Activated T-helper 1 cell treated with anti-CD3 and anti-CD28 coated beads, Interleukin-12 subunit alpha, Interleukin-12 subunit beta, Interleukin-2, Interleukin-4 antibody, amounts not matched to agents 30 ng/mL and 10 ng/mL and 1 ng/mL, durations not matched to agents 14 hours and 24 hours and 36 hours (primary cell): ENCODE measurements at regions of chr4 and their contacts with region 1.

Region 1: DNA sequence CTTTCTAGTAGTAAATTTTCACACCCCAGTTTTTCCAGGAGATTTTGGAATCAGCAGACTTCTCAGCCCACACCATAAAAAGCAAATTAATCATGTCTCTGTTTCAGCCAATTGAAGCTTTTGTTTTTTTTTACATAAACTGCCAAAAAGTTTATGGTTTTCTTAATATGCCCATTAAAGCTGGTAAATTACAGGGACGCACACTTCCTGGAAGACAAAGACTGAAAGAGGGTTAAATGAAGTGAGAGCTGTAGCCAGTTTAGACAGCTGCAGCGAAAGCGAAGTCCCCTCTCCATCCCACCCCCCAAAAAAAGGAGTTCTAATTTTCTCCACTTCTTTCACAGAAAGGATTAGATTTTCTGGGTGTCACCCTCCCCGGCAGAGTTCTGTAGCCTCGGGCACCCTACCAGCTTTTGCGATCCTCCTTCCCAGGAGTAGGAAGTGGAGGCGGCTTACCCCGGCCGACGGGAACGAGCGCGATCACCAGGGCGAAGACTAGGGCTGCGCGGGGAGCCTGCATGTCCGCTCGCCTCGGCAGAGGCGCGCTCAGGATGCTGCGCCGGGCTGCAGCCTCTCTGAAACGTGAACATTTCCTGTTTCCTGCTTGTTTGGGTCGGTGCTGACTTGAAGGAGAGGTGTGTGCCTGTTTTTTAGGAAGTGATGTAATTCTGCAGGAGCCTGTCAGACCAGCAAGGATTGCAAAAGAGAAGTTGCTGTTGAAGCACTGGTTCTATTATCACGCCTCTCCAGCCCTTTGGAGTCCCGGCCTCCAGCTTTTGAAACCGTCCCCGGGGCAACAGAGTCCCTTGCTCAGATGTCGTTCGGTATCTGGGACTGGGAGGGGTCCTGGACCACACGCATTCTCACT is at the start of gene TMEM154:
- DNase-seq: peak; percentile 77
- H3K4me3 Mint-ChIP-seq: peak within 1 kb of the TSS; percentile 91
- H3K27ac Mint-ChIP-seq: peak within 1 kb of the TSS; percentile 92
- H3K4me1 Mint-ChIP-seq: peaks cover 84% of the 10 kb centered on the region
- H3K27me3 Mint-ChIP-seq: no peaks in the 10 kb centered on the region
- total RNA-seq, gene TMEM154: 13.0 and 13.3 TPM in 2 replicates

Region 2: DNA sequence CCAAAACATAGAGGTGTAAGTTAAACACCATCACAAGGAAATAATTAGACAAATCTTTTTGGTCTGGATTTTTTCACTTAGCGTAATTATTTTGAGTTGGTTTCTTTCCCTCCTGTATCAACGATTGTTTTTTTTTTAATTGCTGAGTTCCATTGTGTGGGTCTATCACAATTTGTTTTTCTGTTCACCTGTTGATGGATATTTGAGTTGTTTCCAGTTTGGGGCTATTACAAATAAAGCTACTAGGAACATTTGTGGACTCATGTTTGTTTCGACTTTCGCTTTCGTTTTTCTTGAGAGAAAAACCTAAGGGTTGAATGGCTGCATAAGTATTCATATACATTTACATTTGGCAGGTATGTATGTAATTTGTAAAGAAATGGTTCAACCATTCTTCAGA is 123.4 kb before region 1 on chr4:
- intact Hi-C with region 1: loop called (anchors 1 kb)
- DNase-seq: no peak
- H3K4me3 Mint-ChIP-seq: peak overlapping the region; percentile 41
- H3K27ac Mint-ChIP-seq: peak overlapping the region; percentile 77
- H3K4me1 Mint-ChIP-seq: peaks cover 43% of the 10 kb centered on the region
- H3K27me3 Mint-ChIP-seq: no peaks in the 10 kb centered on the region

Region 3: GRCh38 chr4:152663203-152664066 is 16.2 kb before region 1 on chr4:
- intact Hi-C with region 1: loop called (anchors 2 kb)
- DNase-seq: no peak
- H3K4me3 Mint-ChIP-seq: peak overlapping the region; percentile 59
- H3K27ac Mint-ChIP-seq: peak overlapping the region; percentile 87
- H3K4me1 Mint-ChIP-seq: peaks cover 53% of the 10 kb centered on the region
- H3K27me3 Mint-ChIP-seq: no peaks in the 10 kb centered on the region

Region 4: GRCh38 chr4:152689615-152690501 is 10.2 kb after region 1 on chr4:
- intact Hi-C with region 1: loop called (anchors 1 kb)
- DNase-seq: no peak
- H3K4me3 Mint-ChIP-seq: no peak overlapping the region
- H3K27ac Mint-ChIP-seq: no peak overlapping the region
- H3K4me1 Mint-ChIP-seq: peaks cover 1% of the 10 kb centered on the region
- H3K27me3 Mint-ChIP-seq: no peaks in the 10 kb centered on the region

Region 5: GRCh38 chr4:152696764-152697261 is 17.2 kb after region 1 on chr4:
- intact Hi-C with region 1: loop called (anchors 1 kb)
- DNase-seq: peak; percentile 64
- H3K4me3 Mint-ChIP-seq: no peak overlapping the region
- H3K27ac Mint-ChIP-seq: no peak overlapping the region
- H3K4me1 Mint-ChIP-seq: peaks cover 23% of the 10 kb centered on the region
- H3K27me3 Mint-ChIP-seq: peaks cover 13% of the 10 kb centered on the region

Region 6: DNA sequence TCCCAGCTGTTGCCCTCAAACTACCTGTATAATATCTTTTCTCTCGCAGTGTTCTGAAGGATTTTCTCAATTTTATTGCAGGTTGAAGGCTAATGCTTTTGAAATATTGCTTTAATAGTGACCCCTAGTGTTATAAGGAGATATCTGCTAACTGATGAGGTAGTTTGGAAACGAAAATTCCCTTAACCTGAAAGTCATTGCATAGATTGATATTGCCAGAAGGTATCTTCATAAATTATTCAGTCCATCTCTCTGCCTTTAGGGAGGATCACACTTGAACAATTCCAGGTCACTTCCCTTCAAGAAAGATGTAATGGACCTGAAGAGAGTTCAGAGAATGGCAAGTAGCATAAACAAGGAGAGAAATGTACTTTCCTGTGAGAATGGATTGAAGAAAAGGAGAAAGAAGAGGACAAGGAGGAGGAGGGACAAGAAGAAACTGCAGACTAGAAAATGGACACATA is 55.8 kb after region 1 on chr4:
- intact Hi-C with region 1: loop called (anchors 5 kb)
- DNase-seq: no peak
- H3K4me3 Mint-ChIP-seq: no peak overlapping the region
- H3K27ac Mint-ChIP-seq: no peak overlapping the region
- H3K4me1 Mint-ChIP-seq: peaks cover 4% of the 10 kb centered on the region
- H3K27me3 Mint-ChIP-seq: peaks cover 6% of the 10 kb centered on the region

Region 7: DNA sequence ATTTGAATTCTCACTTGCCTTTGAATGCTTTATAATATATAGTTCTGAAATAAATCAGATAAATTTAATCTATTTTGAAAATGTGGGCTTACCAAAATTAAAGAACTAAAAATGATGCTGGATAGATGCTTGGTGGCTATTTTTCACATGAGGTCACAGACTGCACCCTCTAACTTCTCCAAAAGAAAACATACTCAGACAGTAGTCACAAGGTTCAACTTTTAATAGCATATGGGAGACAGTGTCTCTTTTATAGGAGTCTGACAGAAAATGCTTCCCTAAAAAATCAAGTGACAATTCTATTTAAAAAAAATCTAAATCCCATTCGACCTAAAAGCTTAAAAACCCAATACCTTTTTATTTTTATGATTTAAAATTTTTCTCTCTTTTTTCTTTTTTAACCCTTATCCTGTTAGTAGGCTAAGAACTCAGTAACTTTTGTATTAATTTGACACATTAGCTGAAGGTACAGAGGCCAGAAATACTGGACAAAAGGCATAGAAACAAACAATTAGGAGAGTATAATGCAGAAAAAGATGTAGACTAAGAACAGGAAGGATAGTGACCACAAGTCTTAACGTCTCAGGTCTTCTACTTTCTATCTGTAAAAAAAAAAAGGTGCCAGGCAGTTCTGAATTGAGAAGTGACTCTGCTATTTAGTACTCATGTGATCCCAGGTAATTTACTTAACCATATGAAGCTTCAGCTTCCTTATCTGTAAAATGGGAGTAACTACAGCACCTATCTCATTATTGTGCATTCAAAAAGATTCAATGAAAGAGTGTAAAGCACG is 92.3 kb after region 1 on chr4:
- intact Hi-C with region 1: no loop called
- DNase-seq: no peak
- H3K4me3 Mint-ChIP-seq: no peak overlapping the region
- H3K27ac Mint-ChIP-seq: no peak overlapping the region
- H3K4me1 Mint-ChIP-seq: peaks cover 12% of the 10 kb centered on the region
- H3K27me3 Mint-ChIP-seq: peaks cover 13% of the 10 kb centered on the region